A673 (cell line): ENCODE measurements at regions of chr1 and their contacts with region 1.

Region 1: GRCh38 chr1:184457500-184457899 is 70.7 kb downstream of the C1orf21 start:
- DNase-seq: peak; percentile 6
- H3K4me3 ChIP-seq: no peak overlapping the region
- H3K27ac ChIP-seq: no peak overlapping the region
- H3K4me1 ChIP-seq: peaks cover 20% of the 10 kb centered on the region
- H3K27me3 ChIP-seq: no peaks in the 10 kb centered on the region
- CTCF ChIP-seq: no peak

Region 2: DNA sequence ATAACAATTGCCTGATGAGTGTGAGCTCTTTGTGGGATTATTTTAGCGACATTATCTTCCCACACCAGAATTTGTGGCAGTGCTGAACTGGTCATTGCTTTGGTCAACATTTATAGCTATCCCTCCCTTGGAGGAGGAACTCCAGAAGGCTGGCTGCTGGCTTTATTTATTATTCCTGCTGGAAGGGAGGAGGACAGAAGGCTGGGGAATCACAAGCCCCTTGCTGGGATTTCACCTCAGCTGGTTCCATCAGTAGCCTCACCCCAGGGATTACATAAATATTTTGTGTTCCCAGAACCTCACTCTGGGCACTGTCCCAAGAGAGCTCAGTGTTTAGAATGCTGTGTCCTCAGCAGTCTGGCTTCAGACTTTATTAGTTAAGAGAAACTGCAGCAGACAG is 173.5 kb before region 1 on chr1:
- CTCF ChIA-PET with region 1: no interaction called
- POLR2A ChIA-PET with region 1: no interaction called
- intact Hi-C with region 1: no loop called
- DNase-seq: peak; percentile 21
- H3K4me3 ChIP-seq: no peak overlapping the region
- H3K27ac ChIP-seq: no peak overlapping the region
- H3K4me1 ChIP-seq: no peaks in the 10 kb centered on the region
- H3K27me3 ChIP-seq: no peaks in the 10 kb centered on the region
- CTCF ChIP-seq: no peak

Region 3: DNA sequence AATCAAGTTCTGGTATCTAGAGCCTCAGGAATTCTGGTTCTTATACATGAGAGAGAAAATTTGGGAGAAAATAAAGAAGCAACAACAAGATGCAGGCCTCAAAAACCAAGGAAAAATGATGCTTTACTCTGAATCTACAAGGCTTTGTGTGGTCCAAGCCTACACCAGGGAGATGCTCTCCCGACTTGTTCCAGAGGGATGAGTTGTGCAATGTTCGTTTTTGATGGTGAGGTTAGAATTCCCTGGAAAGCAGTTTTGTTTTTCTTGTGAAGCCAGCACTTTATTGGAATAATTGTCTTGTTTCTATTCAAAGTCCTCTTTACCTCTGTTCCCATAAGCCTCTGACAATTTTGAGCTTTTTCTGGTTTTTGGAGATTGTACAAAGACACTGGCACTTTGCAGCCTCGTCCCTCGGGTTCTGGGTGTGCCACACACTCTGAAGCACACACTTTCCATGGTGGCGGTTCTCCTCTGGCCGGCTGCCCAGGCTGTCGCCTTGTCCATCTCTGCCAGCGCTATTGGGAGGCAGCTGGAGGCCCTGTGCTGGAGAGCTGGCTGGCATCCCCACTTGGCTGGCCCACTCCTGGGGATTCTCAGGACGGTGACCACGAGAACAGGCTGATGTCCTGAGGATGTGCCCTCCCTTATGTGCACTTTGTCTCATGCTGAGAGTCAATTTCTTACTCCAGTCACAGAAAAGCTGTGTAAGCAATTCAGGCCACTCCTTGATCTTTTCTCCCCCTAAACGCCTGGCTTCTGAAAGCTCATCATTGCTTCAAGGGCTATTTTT is 227.0 kb after region 1 on chr1:
- CTCF ChIA-PET with region 1: no interaction called
- POLR2A ChIA-PET with region 1: no interaction called
- intact Hi-C with region 1: no loop called
- DNase-seq: no peak
- H3K4me3 ChIP-seq: no peak overlapping the region
- H3K27ac ChIP-seq: no peak overlapping the region
- H3K4me1 ChIP-seq: no peaks in the 10 kb centered on the region
- H3K27me3 ChIP-seq: no peaks in the 10 kb centered on the region
- CTCF ChIP-seq: no peak

Region 4: DNA sequence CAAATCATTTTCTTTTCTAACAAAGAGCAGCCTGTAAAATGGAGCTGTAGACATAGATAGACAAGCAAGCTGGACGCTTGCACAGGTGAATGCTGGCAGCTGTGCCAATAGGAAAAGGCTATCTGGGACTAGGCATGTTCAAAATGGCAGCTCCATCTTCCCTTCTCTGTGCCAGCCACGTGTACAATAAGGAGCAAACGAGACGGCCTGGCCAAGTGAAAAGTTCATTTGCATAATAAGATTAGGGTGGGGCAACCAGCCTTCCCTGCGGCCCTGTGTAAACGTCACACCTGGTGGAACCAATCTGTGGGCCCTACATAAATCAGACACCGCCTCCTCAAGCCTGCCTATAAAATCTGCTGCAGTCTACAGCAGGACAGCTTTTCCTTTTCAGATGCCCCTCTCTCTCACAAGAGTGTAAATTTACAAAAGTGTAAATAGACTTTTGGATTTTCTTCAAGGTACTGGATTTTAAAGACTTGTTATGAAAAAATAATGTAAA is 313.7 kb after region 1 on chr1:
- CTCF ChIA-PET with region 1: no interaction called
- POLR2A ChIA-PET with region 1: no interaction called
- intact Hi-C with region 1: no loop called
- DNase-seq: peak; percentile 90
- H3K4me3 ChIP-seq: no peak overlapping the region
- H3K27ac ChIP-seq: no peak overlapping the region
- H3K4me1 ChIP-seq: peaks cover 17% of the 10 kb centered on the region
- H3K27me3 ChIP-seq: peaks cover 9% of the 10 kb centered on the region
- CTCF ChIP-seq: no peak

Region 5: DNA sequence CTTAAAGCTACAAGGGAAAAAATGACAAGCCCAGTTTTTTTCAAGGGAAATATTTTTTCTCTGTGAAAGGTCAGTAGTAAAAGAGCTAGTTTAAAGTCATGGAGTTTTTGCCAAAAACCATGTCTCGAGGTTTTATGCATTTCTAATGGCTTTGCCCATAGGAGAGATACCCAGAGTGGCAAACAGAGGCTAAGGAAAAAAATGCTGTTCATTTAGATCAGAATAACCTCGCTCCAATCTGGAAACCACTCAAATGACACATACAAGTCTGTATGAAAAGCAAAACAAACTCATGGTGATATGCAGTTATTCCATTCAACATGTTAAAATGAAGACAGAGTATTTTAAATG is 334.0 kb after region 1 on chr1:
- CTCF ChIA-PET with region 1: no interaction called
- POLR2A ChIA-PET with region 1: interaction called, 10 read pairs
- intact Hi-C with region 1: no loop called
- DNase-seq: no peak
- H3K4me3 ChIP-seq: no peak overlapping the region
- H3K27ac ChIP-seq: no peak overlapping the region
- H3K4me1 ChIP-seq: peaks cover 27% of the 10 kb centered on the region
- H3K27me3 ChIP-seq: no peaks in the 10 kb centered on the region
- CTCF ChIP-seq: no peak